Aorta (tissue), 5 donors: ENCODE measurements at regions of chrX and their contacts with region 1.

Region 1: GRCh38 chrX:63918611-63919010 is 133.6 kb upstream of the ARHGEF9 start:
- DNase-seq: no peak
- ATAC-seq: peak; percentile 53
- H3K4me3 ChIP-seq: no peak overlapping the region
- H3K27ac ChIP-seq: no peak overlapping the region
- H3K4me1 ChIP-seq: no peaks in the 10 kb centered on the region
- H3K27me3 ChIP-seq: no peaks in the 10 kb centered on the region

Region 2: GRCh38 chrX:63115196-63115595 is 803.4 kb before region 1 on chrX:
- intact Hi-C with region 1: no loop called
- DNase-seq: no peak
- ATAC-seq: no peak
- H3K4me3 ChIP-seq: no peak overlapping the region
- H3K27ac ChIP-seq: no peak overlapping the region
- H3K4me1 ChIP-seq: no peaks in the 10 kb centered on the region
- H3K27me3 ChIP-seq: no peaks in the 10 kb centered on the region

Region 3: DNA sequence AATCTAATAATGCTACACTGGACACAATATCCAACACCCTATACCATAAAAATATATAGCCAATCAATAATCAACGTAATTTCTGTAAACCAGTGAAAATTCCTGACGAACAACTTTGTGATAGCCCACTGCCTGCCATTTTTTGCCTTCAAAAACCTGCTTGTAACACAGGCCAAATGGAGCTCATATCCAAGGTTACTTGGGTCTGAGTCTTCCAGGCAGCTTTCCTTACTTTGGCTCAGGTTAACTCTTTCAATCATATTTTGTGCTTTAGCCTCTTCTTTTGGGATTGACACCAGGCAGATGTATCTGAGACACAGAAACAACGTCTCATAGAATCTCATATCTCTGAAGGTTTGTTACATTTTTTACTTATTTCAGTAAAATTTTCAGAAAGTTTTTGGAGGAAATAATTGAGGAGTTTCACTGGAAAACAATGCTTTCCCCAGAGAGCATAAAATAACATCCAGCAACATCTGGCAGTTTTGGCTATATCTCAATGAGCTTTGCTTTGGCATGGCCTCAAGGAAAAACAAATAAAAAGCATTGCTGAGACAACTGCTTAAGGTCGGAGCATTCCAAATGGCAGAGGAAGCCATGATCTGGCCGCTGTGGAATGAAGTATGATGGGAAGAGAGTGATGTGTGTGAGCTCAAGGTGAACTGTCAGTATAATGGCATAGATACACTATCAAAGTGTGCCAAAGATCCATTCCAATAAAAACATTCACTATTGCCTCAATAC is 404.6 kb before region 1 on chrX:
- intact Hi-C with region 1: no loop called
- DNase-seq: no peak
- ATAC-seq: peak; percentile 29
- H3K4me3 ChIP-seq: no peak overlapping the region
- H3K27ac ChIP-seq: no peak overlapping the region
- H3K4me1 ChIP-seq: no peaks in the 10 kb centered on the region
- H3K27me3 ChIP-seq: no peaks in the 10 kb centered on the region

Region 4: GRCh38 chrX:63560601-63561218 is 357.9 kb before region 1 on chrX:
- intact Hi-C with region 1: loop called in 1 of 2 experiments (anchors 5 kb)
- DNase-seq: peak; percentile 56 to 79
- ATAC-seq: peak; percentile 90
- H3K4me3 ChIP-seq: peak overlapping the region; percentile 58 to 65
- H3K27ac ChIP-seq: peak overlapping the region in 1 of 2 donors; percentile 50
- H3K4me1 ChIP-seq: no peaks in the 10 kb centered on the region
- H3K27me3 ChIP-seq: no peaks in the 10 kb centered on the region

Region 5: GRCh38 chrX:63761639-63762038 is 157.0 kb before region 1 on chrX:
- intact Hi-C with region 1: loop called in 1 of 2 experiments (anchors 5 kb)
- DNase-seq: no peak
- ATAC-seq: no peak
- H3K4me3 ChIP-seq: no peak overlapping the region
- H3K27ac ChIP-seq: peak overlapping the region in 1 of 2 donors; percentile 25
- H3K4me1 ChIP-seq: peaks cover 2 to 5% of the 10 kb centered on the region in 2 donors
- H3K27me3 ChIP-seq: no peaks in the 10 kb centered on the region

Region 6: DNA sequence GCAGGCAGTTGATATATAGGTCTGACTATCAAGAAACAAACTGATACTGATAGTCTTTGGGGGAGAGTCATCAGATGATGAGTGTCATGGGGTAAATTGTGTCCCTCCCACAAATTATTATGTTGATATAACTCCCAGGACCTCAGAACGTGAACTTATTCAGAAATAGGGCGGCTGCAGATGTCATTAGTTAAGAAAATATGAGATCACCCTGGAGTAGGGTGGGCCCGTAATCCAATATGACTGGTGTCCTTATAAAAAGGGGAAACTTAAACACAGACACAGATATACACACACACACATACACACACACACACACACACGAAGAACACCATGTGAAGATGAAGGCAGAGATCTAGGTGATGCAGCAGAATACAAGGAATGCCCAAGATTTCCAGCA is 100.9 kb before region 1 on chrX:
- intact Hi-C with region 1: no loop called
- DNase-seq: no peak
- ATAC-seq: no peak
- H3K4me3 ChIP-seq: no peak overlapping the region
- H3K27ac ChIP-seq: no peak overlapping the region
- H3K4me1 ChIP-seq: no peaks in the 10 kb centered on the region
- H3K27me3 ChIP-seq: no peaks in the 10 kb centered on the region

Region 7: GRCh38 chrX:64739792-64740378 is 821.3 kb after region 1 on chrX:
- intact Hi-C with region 1: no loop called
- DNase-seq: no peak
- ATAC-seq: no peak
- H3K4me3 ChIP-seq: no peak overlapping the region
- H3K27ac ChIP-seq: no peak overlapping the region
- H3K4me1 ChIP-seq: no peaks in the 10 kb centered on the region
- H3K27me3 ChIP-seq: no peaks in the 10 kb centered on the region